Left colon (tissue), 2 donors: ENCODE measurements at regions of chr5 and their contacts with region 1.

Region 1: DNA sequence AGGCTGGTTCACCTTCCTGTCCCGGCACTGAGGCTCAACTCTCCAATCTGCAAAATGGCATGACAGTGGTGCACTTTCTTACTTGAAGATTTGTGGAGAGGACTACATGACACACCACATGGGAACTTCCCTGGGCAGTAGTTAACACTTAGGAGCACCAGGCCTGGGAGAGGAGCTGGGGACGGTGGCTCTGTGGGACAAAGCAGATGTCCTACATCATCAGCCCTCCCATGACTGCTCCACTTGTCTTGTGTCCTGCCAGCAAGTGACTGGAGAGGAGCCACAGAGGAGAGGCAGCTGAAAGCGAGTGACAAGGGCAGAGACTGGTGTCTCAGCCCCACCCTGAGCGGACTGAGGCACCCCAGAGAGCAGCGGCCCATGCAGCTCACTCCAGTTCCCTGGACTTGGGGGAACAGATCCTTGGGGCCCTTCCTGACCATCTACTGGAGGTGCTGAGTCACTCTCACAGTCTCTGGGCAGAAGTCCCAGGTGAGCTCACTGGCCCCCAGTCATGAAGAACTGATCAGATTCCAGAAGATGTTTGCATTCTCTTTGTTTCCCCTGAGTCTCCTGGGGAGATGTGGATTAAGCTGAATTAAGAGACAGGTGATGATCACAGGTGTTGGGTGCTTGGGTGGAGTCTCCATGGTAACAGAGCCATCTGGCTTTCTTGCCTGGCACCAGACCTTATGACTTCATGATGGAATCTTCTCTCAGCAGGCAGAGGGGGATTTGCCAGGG is 13.2 kb upstream of the SLC25A48 start:
- DNase-seq: no peak
- ATAC-seq: no peak

Region 2: DNA sequence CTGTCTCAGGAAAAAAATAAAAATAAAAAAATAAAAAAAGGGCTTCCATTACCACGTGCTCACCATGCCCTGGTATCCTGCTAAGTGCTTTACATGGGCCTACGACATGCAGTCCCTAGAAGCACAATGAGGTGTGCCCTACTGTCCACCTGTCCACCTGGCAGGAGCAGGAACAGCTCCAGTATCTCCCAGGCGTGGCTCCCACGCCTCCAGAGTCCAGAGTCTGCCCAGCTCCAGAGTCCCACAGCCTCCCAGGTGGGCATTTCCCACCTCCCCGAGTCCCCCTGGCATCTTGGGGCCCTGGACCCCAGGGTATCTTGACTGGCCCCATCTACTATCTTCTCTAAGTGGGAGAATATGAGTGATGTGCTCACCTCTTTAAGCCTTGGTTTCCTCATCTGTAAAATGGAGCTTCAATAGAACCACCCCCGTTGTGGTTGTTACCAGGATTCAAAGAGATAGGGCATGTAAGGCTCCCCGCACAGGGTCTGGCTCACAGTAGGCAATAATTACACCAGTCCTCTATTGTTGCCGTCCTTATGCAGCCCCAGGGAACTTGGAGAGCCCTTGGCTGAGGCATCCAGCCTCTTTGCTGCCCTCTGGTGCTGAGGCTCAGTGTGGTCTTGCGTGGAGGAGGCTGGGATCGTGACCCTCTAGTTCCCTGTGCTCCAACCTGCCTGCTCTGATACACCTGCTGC is 251.3 kb before region 1 on chr5:
- intact Hi-C with region 1: loop called (anchors 5 to 10 kb)
- DNase-seq: peak in 1 of 2 donors; percentile 48
- ATAC-seq: peak; percentile 69

Region 3: GRCh38 chr5:135635451-135635850 is 185.8 kb before region 1 on chr5:
- intact Hi-C with region 1: no loop called
- DNase-seq: no peak
- ATAC-seq: no peak